ENCODE measurements at regions of chr4 and their contacts with region 1.

Region 1: GRCh38 chr4:39977489-39978377 is at the start of gene PDS5A:
- DNase-seq: peak; percentile 90
- ATAC-seq: peak; percentile 91
- H3K4me3 Mint-ChIP-seq: peak within 1 kb of the TSS; percentile 80
- H3K27ac Mint-ChIP-seq: peak within 1 kb of the TSS; percentile 98
- H3K4me1 Mint-ChIP-seq: peaks cover 30% of the 10 kb centered on the region
- H3K27me3 Mint-ChIP-seq: no peaks in the 10 kb centered on the region
- CTCF ChIP-seq: peak; percentile 70
- total RNA-seq, gene PDS5A: 105 to 106 TPM

Region 2: DNA sequence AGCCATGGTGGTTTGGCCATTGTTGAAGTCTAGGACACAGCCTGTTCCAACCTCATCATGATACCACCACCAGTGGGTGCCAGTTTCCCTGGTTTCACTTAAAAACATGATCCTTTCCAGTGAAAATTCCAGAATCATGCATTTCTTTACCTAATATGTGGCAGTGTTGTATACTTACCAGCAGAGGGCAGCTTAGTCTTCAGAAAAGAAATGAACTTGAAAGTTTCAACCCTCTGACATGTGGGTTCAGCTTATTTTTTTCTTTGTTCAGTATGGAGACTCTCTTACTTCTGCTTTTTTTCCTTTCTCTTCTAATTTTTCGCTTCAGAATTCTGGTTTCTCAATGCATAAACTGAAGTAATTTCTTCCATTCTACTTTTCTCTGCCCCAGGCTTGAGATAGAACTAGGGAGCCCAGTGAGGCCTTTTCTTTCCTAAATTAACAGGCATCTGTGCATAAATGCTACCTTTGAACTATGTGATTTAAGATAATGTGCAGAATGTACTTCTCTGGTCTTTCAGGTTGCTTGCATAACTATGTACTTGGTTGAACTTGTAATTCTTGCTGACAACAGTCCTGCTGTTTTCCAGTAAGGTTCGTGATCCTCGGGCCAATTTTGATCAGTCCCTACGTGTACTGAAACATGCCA is 508.2 kb before region 1 on chr4:
- CTCF ChIA-PET with region 1: interaction called, 5 read pairs
- POLR2A ChIA-PET with region 1: no interaction called
- intact Hi-C with region 1: loop called (anchors 10 kb)
- DNase-seq: peak; percentile 16
- ATAC-seq: peak; percentile 79
- H3K4me3 Mint-ChIP-seq: no peak overlapping the region
- H3K27ac Mint-ChIP-seq: peak overlapping the region; percentile 60
- H3K4me1 Mint-ChIP-seq: peaks cover 8% of the 10 kb centered on the region
- H3K27me3 Mint-ChIP-seq: no peaks in the 10 kb centered on the region
- CTCF ChIP-seq: peak; percentile 94

Region 3: DNA sequence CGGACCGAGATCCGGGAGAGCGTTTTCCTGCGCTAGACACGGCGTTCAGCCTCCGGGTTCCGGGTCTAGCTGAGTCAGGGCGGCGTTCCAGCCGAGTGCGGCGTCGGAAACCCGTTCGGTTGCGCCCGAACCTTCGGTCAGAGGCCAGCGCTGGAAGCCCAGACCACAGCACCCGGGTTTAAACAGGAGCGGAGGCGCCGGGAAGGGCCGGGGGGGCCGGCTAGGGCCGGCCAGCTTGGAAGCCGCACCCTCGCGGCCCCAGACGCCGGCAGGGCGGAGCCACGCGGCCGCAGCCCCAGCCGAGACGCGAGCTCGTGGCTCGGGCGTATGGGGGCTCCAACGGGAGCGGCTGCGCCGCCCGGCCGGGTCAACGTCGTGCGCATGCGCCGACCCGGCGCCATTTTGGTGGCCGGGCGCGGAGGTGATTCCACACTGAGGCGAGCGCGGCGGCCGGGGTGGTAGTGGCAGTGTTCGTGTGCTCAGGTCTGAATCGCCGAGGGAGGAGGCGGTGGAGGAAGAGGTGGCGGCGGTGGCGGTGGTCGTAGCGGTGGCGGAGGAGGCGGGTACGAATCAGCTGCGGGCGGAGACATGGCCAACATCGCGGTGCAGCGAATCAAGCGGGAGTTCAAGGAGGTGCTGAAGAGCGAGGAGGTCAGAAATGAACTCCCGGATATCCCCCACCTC is 279.9 kb before region 1 on chr4 and contains the start of gene UBE2K:
- CTCF ChIA-PET with region 1: interaction called, 6 read pairs
- POLR2A ChIA-PET with region 1: interaction called, 3 read pairs
- intact Hi-C with region 1: loop called (anchors 5 kb)
- DNase-seq: peak; percentile 87
- ATAC-seq: peak; percentile 84
- H3K4me3 Mint-ChIP-seq: peak within 1 kb of the TSS; percentile 92
- H3K27ac Mint-ChIP-seq: peak within 1 kb of the TSS; percentile 98
- H3K4me1 Mint-ChIP-seq: peaks cover 27% of the 10 kb centered on the region
- H3K27me3 Mint-ChIP-seq: no peaks in the 10 kb centered on the region
- CTCF ChIP-seq: no peak
- total RNA-seq, gene UBE2K: 69.5 to 77.1 TPM

Region 4: GRCh38 chr4:39814403-39815185 is 163.1 kb before region 1 on chr4:
- CTCF ChIA-PET with region 1: no interaction called
- POLR2A ChIA-PET with region 1: no interaction called
- intact Hi-C with region 1: no loop called
- DNase-seq: peak; percentile 21
- ATAC-seq: no peak
- H3K4me3 Mint-ChIP-seq: peak overlapping the region; percentile 32
- H3K27ac Mint-ChIP-seq: peak overlapping the region; percentile 63
- H3K4me1 Mint-ChIP-seq: peaks cover 3% of the 10 kb centered on the region
- H3K27me3 Mint-ChIP-seq: no peaks in the 10 kb centered on the region
- CTCF ChIP-seq: no peak

Region 5: DNA sequence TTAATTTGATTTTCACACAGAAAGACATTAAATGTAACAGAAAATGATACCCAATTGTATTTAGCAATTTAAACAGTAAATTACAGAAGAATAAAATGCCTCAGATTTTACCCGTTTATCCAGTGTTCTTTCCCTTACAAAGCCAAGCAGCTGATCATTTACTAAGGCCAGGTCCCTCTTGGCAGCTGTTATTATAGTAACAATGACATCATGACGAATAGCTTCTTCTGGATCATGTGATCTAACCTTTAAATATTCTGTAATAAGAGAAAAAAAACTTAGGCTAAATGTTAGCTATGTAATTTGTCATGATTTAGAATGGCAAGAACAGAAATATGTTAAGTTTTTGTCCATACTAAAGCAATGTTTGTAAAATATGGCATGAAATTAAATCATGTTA is 69.4 kb before region 1 on chr4:
- CTCF ChIA-PET with region 1: interaction called, 3 read pairs
- POLR2A ChIA-PET with region 1: no interaction called
- intact Hi-C with region 1: loop called (anchors 10 kb)
- DNase-seq: no peak
- ATAC-seq: no peak
- H3K4me3 Mint-ChIP-seq: no peak overlapping the region
- H3K27ac Mint-ChIP-seq: no peak overlapping the region
- H3K4me1 Mint-ChIP-seq: peaks cover 6% of the 10 kb centered on the region
- H3K27me3 Mint-ChIP-seq: no peaks in the 10 kb centered on the region
- CTCF ChIP-seq: no peak

Region 6: GRCh38 chr4:40056716-40057585 is 79.2 kb after region 1 on chr4 and contains the start of gene N4BP2:
- CTCF ChIA-PET with region 1: interaction called, 8 read pairs
- POLR2A ChIA-PET with region 1: interaction called, 11 read pairs
- intact Hi-C with region 1: no loop called
- DNase-seq: peak; percentile 77
- ATAC-seq: peak; percentile 59
- H3K4me3 Mint-ChIP-seq: peak within 1 kb of the TSS; percentile 96
- H3K27ac Mint-ChIP-seq: peak within 1 kb of the TSS; percentile 97
- H3K4me1 Mint-ChIP-seq: peaks cover 32% of the 10 kb centered on the region
- H3K27me3 Mint-ChIP-seq: peaks cover 6% of the 10 kb centered on the region
- CTCF ChIP-seq: peak; percentile 75
- total RNA-seq, gene N4BP2: 17.4 to 17.5 TPM